HCT116 (cell line): ENCODE measurements at regions of chr3 and their contacts with region 1.

Region 1: DNA sequence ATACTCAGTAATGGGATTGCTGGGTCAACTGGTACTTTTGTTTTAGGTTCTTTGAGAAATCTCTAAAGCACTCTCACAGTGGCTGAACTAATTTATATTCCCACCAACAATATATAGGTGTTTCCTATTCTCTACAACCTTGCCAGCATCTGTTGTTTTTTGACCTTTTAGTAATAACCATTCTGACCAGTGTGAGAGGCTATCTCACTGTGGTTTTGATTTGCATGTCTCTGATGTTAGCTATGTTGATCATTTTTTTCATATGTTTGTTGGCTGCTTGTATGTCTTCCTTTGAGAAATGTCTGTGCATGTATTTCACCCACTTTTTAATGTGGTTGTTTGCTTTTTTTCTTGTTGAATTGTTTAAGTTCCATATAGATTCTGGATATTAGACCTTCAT is 98.2 kb upstream of the DCBLD2 start:
- DNase-seq: no peak
- ATAC-seq: no peak
- H3K4me3 ChIP-seq: no peak overlapping the region
- H3K27ac ChIP-seq: no peak overlapping the region
- H3K4me1 ChIP-seq: no peaks in the 10 kb centered on the region
- H3K27me3 ChIP-seq: no peaks in the 10 kb centered on the region
- CTCF ChIP-seq: no peak
- POLR2A ChIP-seq: no peak
- RAD21 ChIP-seq: no peak

Region 2: GRCh38 chr3:98058244-98058960 is 941.3 kb before region 1 on chr3:
- CTCF ChIA-PET with region 1: no interaction called
- POLR2A ChIA-PET with region 1: no interaction called
- RAD21 ChIA-PET with region 1: no interaction called
- intact Hi-C with region 1: loop called (anchors 10 kb)
- DNase-seq: no peak
- ATAC-seq: no peak
- H3K4me3 ChIP-seq: no peak overlapping the region
- H3K27ac ChIP-seq: no peak overlapping the region
- H3K4me1 ChIP-seq: no peaks in the 10 kb centered on the region
- H3K27me3 ChIP-seq: no peaks in the 10 kb centered on the region
- CTCF ChIP-seq: no peak
- POLR2A ChIP-seq: no peak
- RAD21 ChIP-seq: no peak

Region 3: GRCh38 chr3:98855806-98856400 is 143.8 kb before region 1 on chr3:
- CTCF ChIA-PET with region 1: no interaction called
- POLR2A ChIA-PET with region 1: no interaction called
- RAD21 ChIA-PET with region 1: no interaction called
- intact Hi-C with region 1: no loop called
- DNase-seq: no peak
- ATAC-seq: no peak
- H3K4me3 ChIP-seq: no peak overlapping the region
- H3K27ac ChIP-seq: no peak overlapping the region; the same call in 1 of the 2 replicates
- H3K4me1 ChIP-seq: peaks cover 7 to 37% of the 10 kb centered on the region in 2 experiments; a peak in 3 of 4 replicates
- H3K27me3 ChIP-seq: no peaks in the 10 kb centered on the region
- CTCF ChIP-seq: no peak
- POLR2A ChIP-seq: no peak
- RAD21 ChIP-seq: no peak

Region 4: GRCh38 chr3:98914210-98915080 is 85.2 kb before region 1 on chr3:
- CTCF ChIA-PET with region 1: no interaction called
- POLR2A ChIA-PET with region 1: no interaction called
- RAD21 ChIA-PET with region 1: no interaction called
- intact Hi-C with region 1: no loop called
- DNase-seq: no peak
- ATAC-seq: peak; percentile 86
- H3K4me3 ChIP-seq: peak overlapping the region in 1 of 2 experiments; percentile 1; a peak in 1 of 4 replicates
- H3K27ac ChIP-seq: peak overlapping the region; percentile 44
- H3K4me1 ChIP-seq: peaks cover 22 to 39% of the 10 kb centered on the region in 2 experiments
- H3K27me3 ChIP-seq: no peaks in the 10 kb centered on the region
- CTCF ChIP-seq: no peak
- POLR2A ChIP-seq: no peak
- RAD21 ChIP-seq: no peak

Region 5: GRCh38 chr3:99023590-99024192 is 24.0 kb after region 1 on chr3:
- CTCF ChIA-PET with region 1: no interaction called
- POLR2A ChIA-PET with region 1: no interaction called
- RAD21 ChIA-PET with region 1: no interaction called
- intact Hi-C with region 1: no loop called
- DNase-seq: peak; percentile 22
- ATAC-seq: peak; percentile 53; the same call in 1 of the 2 replicates
- H3K4me3 ChIP-seq: no peak overlapping the region
- H3K27ac ChIP-seq: no peak overlapping the region
- H3K4me1 ChIP-seq: no peaks in the 10 kb centered on the region
- H3K27me3 ChIP-seq: no peaks in the 10 kb centered on the region
- CTCF ChIP-seq: peak; percentile 47 to 76 (median 49); a peak in 5 of 6 replicates
- POLR2A ChIP-seq: no peak
- RAD21 ChIP-seq: peak; percentile 68

Region 6: GRCh38 chr3:99218468-99218867 is 218.8 kb after region 1 on chr3:
- CTCF ChIA-PET with region 1: no interaction called
- POLR2A ChIA-PET with region 1: no interaction called
- RAD21 ChIA-PET with region 1: no interaction called
- intact Hi-C with region 1: no loop called
- DNase-seq: peak; percentile 0
- ATAC-seq: no peak
- H3K4me3 ChIP-seq: no peak overlapping the region
- H3K27ac ChIP-seq: no peak overlapping the region
- H3K4me1 ChIP-seq: no peaks in the 10 kb centered on the region
- H3K27me3 ChIP-seq: peaks cover 3% of the 10 kb centered on the region; the same call in 1 of the 2 replicates
- CTCF ChIP-seq: peak in 1 of 3 experiments; percentile 32; a peak in 2 of 6 replicates
- POLR2A ChIP-seq: no peak
- RAD21 ChIP-seq: peak; percentile 18; the same call in 1 of the 2 replicates